Activated T-helper 2 cell treated with anti-CD3 and anti-CD28 coated beads, Interferon-gamma antibody, Interleukin-2, Interleukin-4, amounts not matched to agents 10 μg/mL and 5 μg/mL and 100 μg/mL, durations not matched to agents 14 hours and 24 hours and 36 hours (primary cell): ENCODE measurements at regions of chr2 and their contacts with region 1.

Region 1: DNA sequence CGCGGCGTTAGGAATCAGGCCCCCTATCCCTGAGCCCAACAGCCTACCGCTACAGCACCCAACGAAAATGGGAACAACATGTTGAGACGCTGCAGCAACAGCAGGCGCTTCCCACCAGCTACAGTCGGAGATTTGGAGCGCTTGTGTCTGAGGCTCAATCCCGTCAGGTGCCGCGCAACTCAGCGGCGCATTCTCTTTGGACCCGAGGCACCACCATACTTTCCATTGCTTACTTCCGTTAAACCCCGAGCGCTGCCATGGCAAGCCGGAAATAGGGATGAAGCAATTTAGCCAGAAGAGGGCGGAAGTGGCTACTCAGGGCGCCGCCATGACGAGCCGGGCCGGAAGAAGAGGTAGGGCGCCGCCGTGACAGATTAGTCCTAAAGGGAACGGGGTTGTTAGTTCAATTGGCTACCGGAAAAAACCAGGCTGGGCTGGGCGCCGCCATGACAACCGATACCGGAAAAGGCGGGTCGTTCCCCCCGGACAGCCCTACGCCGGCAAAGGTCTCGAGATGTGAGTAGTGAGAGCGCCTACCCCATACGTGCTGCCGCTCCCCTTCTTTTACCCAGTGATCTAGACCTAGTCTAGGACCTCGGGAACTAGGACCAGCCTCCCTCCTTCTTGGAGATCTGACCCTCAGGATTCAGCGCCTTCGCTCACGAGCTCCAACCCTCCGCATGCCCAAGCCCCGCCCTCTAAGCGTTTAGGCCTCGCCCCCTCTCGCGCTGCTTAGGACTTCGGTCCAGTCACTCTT is at the start of gene CHCHD5:
- DNase-seq: peak; percentile 96
- H3K4me3 Mint-ChIP-seq: peak within 1 kb of the TSS; percentile 97
- H3K27ac Mint-ChIP-seq: peak within 1 kb of the TSS; percentile 98
- H3K4me1 Mint-ChIP-seq: peaks cover 26% of the 10 kb centered on the region
- H3K27me3 Mint-ChIP-seq: no peaks in the 10 kb centered on the region
- total RNA-seq, gene CHCHD5: 36.7 and 39.6 TPM in 2 replicates

Region 2: GRCh38 chr2:111883661-111884591 is 700.4 kb before region 1 on chr2 and contains the start of gene ANAPC1:
- intact Hi-C with region 1: loop called (anchors 5 kb)
- DNase-seq: peak; percentile 84
- H3K4me3 Mint-ChIP-seq: peak within 1 kb of the TSS; percentile 93
- H3K27ac Mint-ChIP-seq: peak within 1 kb of the TSS; percentile 90
- H3K4me1 Mint-ChIP-seq: peaks cover 7% of the 10 kb centered on the region
- H3K27me3 Mint-ChIP-seq: no peaks in the 10 kb centered on the region
- total RNA-seq, gene ANAPC1: 115 and 121 TPM in 2 replicates

Region 3: DNA sequence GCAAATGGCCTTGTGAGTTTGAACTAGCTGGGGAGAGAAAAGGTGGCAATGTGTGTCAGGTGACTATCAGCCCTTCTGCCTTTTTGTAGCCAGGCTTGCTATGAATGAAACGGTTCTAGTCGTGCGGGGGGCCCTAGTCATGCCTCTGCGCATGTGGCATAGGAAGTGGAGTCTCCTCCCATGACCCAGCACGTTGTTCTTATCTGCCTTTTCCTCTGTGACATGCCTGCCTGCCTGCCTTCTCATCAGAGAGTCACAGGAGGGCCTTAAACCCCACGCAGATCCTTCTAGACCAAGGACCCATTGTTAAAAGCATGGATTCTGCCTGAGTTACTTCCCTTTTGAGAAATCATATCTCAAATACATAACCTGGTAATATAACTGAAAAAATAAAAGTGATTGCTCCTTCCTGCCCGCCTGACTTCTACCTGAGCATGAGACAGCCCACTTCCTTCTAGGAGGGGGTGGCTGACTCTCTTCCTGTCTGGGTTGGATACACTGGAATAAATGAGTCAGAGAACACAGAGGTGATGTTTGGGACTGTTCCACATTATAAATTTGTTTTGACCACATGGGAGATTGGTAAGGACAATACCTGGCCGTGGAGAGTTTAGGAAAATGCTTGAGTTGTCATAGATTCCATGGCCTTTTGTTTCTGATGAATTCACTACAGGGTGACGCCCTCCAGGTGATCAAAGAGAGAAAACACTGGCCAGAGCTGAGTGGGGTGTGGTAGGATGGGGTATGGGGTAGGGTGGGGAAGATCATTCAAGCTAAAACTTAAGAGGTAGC is 396.3 kb before region 1 on chr2:
- intact Hi-C with region 1: loop called (anchors 5 kb)
- DNase-seq: peak; percentile 73
- H3K4me3 Mint-ChIP-seq: peak overlapping the region; percentile 31
- H3K27ac Mint-ChIP-seq: peak overlapping the region; percentile 98
- H3K4me1 Mint-ChIP-seq: peaks cover 70% of the 10 kb centered on the region
- H3K27me3 Mint-ChIP-seq: no peaks in the 10 kb centered on the region

Region 4: GRCh38 chr2:112275306-112275886 is 308.9 kb before region 1 on chr2 and contains the start of gene ZC3H6:
- intact Hi-C with region 1: loop called (anchors 5 kb)
- DNase-seq: peak; percentile 100
- H3K4me3 Mint-ChIP-seq: peak within 1 kb of the TSS; percentile 93
- H3K27ac Mint-ChIP-seq: peak within 1 kb of the TSS; percentile 98
- H3K4me1 Mint-ChIP-seq: peaks cover 10% of the 10 kb centered on the region
- H3K27me3 Mint-ChIP-seq: no peaks in the 10 kb centered on the region
- total RNA-seq, gene ZC3H6: 8.0 and 8.2 TPM in 2 replicates

Region 5: GRCh38 chr2:112542123-112542983 is 42.0 kb before region 1 on chr2 and contains the start of gene POLR1B:
- intact Hi-C with region 1: loop called (anchors 1 kb)
- DNase-seq: peak; percentile 78
- H3K4me3 Mint-ChIP-seq: no peak within 1 kb of the TSS
- H3K27ac Mint-ChIP-seq: no peak within 1 kb of the TSS
- H3K4me1 Mint-ChIP-seq: peaks cover 12% of the 10 kb centered on the region
- H3K27me3 Mint-ChIP-seq: no peaks in the 10 kb centered on the region
- total RNA-seq, gene POLR1B: 58.0 and 68.2 TPM in 2 replicates

Region 6: GRCh38 chr2:112692496-112692911 is 108.2 kb after region 1 on chr2:
- intact Hi-C with region 1: loop called (anchors 1 kb)
- DNase-seq: peak; percentile 70
- H3K4me3 Mint-ChIP-seq: peak overlapping the region; percentile 7
- H3K27ac Mint-ChIP-seq: peak overlapping the region; percentile 77
- H3K4me1 Mint-ChIP-seq: peaks cover 31% of the 10 kb centered on the region
- H3K27me3 Mint-ChIP-seq: no peaks in the 10 kb centered on the region